Caco-2 (cell line): ENCODE measurements at regions of chr11 and their contacts with region 1.

Region 1: GRCh38 chr11:118353084-118353710 is 6.2 kb upstream of the UBE4A start:
- DNase-seq: peak in 1 of 2 experiments; percentile 47
- H3K4me3 ChIP-seq: no peak overlapping the region
- H3K4me3 Mint-ChIP-seq: no peak overlapping the region
- H3K27ac Mint-ChIP-seq: no peak overlapping the region
- H3K4me1 ChIP-seq: peaks cover 8% of the 10 kb centered on the region; the same call in 1 of the 2 replicates
- H3K4me1 Mint-ChIP-seq: peaks cover 9% of the 10 kb centered on the region
- H3K27me3 ChIP-seq: no peaks in the 10 kb centered on the region
- H3K27me3 Mint-ChIP-seq: no peaks in the 10 kb centered on the region
- CTCF ChIP-seq: peak; percentile 55 to 81

Region 2: DNA sequence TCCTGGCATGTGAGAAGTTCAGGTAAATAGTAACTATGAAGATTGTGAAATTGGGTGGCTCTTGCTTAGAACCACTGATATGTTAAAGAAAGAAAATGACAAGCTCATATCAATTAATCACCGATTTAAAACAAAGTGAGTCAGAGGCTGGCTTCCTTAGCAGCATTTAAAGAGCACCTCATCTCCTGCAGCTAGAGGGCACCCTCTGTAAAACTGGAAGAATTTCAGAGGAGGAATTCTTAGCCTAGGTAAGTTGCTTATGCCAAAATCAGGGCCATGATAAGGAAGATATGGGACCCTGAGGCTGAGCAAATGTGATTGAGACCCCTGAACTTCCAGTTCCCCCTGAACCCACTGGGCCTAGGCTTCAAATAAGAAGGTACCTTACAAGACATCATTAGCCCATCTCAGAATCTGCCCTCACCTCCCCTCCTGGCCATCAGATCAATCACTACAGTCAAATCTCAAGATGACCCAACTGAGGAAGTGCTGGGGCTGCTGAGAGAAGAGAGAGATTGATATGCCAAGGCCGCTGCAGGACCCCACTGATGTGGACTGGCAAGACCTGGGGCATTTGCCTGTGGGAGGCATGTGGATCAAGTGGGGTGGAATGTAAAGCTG is 57.3 kb before region 1 on chr11:
- CTCF ChIA-PET with region 1: interaction called, 24 read pairs
- POLR2A ChIA-PET with region 1: no interaction called
- intact Hi-C with region 1: loop called (anchors 1 kb)
- DNase-seq: peak; percentile 63 to 69
- H3K4me3 ChIP-seq: no peak overlapping the region
- H3K4me3 Mint-ChIP-seq: no peak overlapping the region
- H3K27ac Mint-ChIP-seq: peak overlapping the region; percentile 14
- H3K4me1 ChIP-seq: peaks cover 9% of the 10 kb centered on the region
- H3K4me1 Mint-ChIP-seq: peaks cover 18% of the 10 kb centered on the region
- H3K27me3 ChIP-seq: no peaks in the 10 kb centered on the region
- H3K27me3 Mint-ChIP-seq: no peaks in the 10 kb centered on the region
- CTCF ChIP-seq: peak; percentile 73 to 86

Region 3: GRCh38 chr11:118321386-118322121 is 31.6 kb before region 1 on chr11:
- CTCF ChIA-PET with region 1: interaction called, 6 read pairs
- POLR2A ChIA-PET with region 1: no interaction called
- intact Hi-C with region 1: loop called (anchors 1 kb)
- DNase-seq: peak; percentile 84
- H3K4me3 ChIP-seq: no peak overlapping the region
- H3K4me3 Mint-ChIP-seq: peak overlapping the region; percentile 59
- H3K27ac Mint-ChIP-seq: peak overlapping the region; percentile 83
- H3K4me1 ChIP-seq: peaks cover 64% of the 10 kb centered on the region
- H3K4me1 Mint-ChIP-seq: peaks cover 41% of the 10 kb centered on the region
- H3K27me3 ChIP-seq: no peaks in the 10 kb centered on the region
- H3K27me3 Mint-ChIP-seq: no peaks in the 10 kb centered on the region
- CTCF ChIP-seq: no peak